Activated T-helper 1 cell treated with anti-CD3 and anti-CD28 coated beads, Interleukin-12 subunit alpha, Interleukin-12 subunit beta, Interleukin-2, Interleukin-4 antibody, amounts not matched to agents 30 ng/mL and 10 ng/mL and 1 ng/mL, durations not matched to agents 14 hours and 24 hours and 36 hours (primary cell): ENCODE measurements at regions of chr17 and their contacts with region 1.

Region 1: GRCh38 chr17:37818689-37819088 is 73.8 kb upstream of the HNF1B start:
- DNase-seq: no peak
- H3K4me3 Mint-ChIP-seq: no peak overlapping the region
- H3K27ac Mint-ChIP-seq: no peak overlapping the region
- H3K4me1 Mint-ChIP-seq: peaks cover 27% of the 10 kb centered on the region
- H3K27me3 Mint-ChIP-seq: peaks cover 20% of the 10 kb centered on the region

Region 2: GRCh38 chr17:37643118-37643766 is 175.4 kb before region 1 on chr17 and contains the start of gene DDX52:
- intact Hi-C with region 1: loop called (anchors 1 kb)
- DNase-seq: peak; percentile 83
- H3K4me3 Mint-ChIP-seq: peak within 1 kb of the TSS; percentile 96
- H3K27ac Mint-ChIP-seq: peak within 1 kb of the TSS; percentile 81
- H3K4me1 Mint-ChIP-seq: peaks cover 33% of the 10 kb centered on the region
- H3K27me3 Mint-ChIP-seq: peaks cover 36% of the 10 kb centered on the region
- total RNA-seq, gene DDX52: 48.7 and 55.0 TPM in 2 replicates

Region 3: GRCh38 chr17:37701496-37701898 is 117.2 kb before region 1 on chr17:
- intact Hi-C with region 1: loop called (anchors 1 kb)
- DNase-seq: peak; percentile 35
- H3K4me3 Mint-ChIP-seq: peak overlapping the region; percentile 45
- H3K27ac Mint-ChIP-seq: no peak overlapping the region
- H3K4me1 Mint-ChIP-seq: peaks cover 59% of the 10 kb centered on the region
- H3K27me3 Mint-ChIP-seq: peaks cover 26% of the 10 kb centered on the region